ENCODE measurements at regions of chr1 and their contacts with region 1.

Region 1: DNA sequence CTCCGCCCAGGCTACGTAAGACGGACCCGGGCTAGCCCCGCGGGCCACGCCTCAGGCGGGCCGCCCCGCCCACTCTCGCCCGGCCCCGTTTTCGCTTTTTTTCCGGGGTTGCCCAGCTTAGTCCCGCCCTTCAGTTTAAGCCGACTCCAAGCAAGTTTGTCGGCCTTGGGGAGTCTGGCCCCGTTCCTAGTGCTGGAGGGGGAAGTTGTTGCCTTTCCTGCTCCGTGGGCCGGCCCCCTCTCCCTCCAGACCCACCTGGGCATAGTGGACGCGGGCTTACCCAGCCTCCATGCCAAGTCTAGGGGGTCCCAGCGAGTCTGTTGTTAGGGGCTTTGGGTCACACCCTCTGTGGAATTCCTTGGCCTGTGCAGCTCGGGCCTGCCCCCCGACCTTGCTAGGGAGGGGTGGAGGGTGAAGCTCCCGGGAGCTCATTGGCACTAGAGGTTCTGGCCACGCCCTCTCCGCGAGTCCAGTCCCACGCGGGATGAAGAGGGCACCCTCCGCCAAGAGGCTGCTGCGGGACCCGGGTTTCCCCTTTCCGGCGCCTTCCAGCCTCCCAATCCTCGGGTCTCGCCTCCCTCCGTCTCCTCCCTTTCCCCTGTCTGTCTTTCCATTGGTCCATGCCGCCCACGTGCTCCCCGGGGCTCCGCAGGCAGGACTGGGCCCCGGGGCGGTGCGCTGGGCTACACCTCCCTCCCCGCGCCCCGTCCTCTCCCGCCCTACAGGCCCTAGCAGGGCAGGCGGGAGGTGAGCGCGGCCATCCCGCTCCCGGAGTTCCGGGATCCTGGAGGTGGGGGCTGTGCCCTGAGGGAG is 3.3 kb downstream of the RUSC1 start:
- DNase-seq: peak; percentile 95
- H3K4me3 ChIP-seq: peak overlapping the region; percentile 61 to 76 (median 70)
- H3K27ac ChIP-seq: peak overlapping the region; percentile 40
- H3K4me1 ChIP-seq: peaks cover 41% of the 10 kb centered on the region
- H3K27me3 ChIP-seq: no peaks in the 10 kb centered on the region
- CTCF ChIP-seq: no peak
- POLR2A ChIP-seq: peak; percentile 56

Region 2: GRCh38 chr1:155178441-155179111 is 145.4 kb before region 1 on chr1:
- CTCF ChIA-PET with region 1: no interaction called
- POLR2A ChIA-PET with region 1: no interaction called
- dilution Hi-C with region 1: no loop called
- intact Hi-C with region 1: no loop called
- DNase-seq: no peak
- H3K4me3 ChIP-seq: no peak overlapping the region
- H3K27ac ChIP-seq: no peak overlapping the region
- H3K4me1 ChIP-seq: peaks cover 3% of the 10 kb centered on the region
- H3K27me3 ChIP-seq: no peaks in the 10 kb centered on the region
- CTCF ChIP-seq: no peak
- POLR2A ChIP-seq: no peak

Region 3: GRCh38 chr1:155261852-155262673 is 61.9 kb before region 1 on chr1 and contains the start of gene SCAMP3:
- CTCF ChIA-PET with region 1: interaction called, 3 read pairs
- POLR2A ChIA-PET with region 1: no interaction called
- dilution Hi-C with region 1: no loop called
- intact Hi-C with region 1: loop called (anchors 1 kb)
- DNase-seq: peak; percentile 99
- H3K4me3 ChIP-seq: peak within 1 kb of the TSS; percentile 51 to 74 (median 64)
- H3K27ac ChIP-seq: peak within 1 kb of the TSS; percentile 6
- H3K4me1 ChIP-seq: peaks cover 8% of the 10 kb centered on the region
- H3K27me3 ChIP-seq: no peaks in the 10 kb centered on the region
- CTCF ChIP-seq: no peak
- POLR2A ChIP-seq: peak; percentile 97
- total RNA-seq, gene SCAMP3: 80.1 and 80.8 TPM in 2 replicates

Region 4: GRCh38 chr1:155308493-155309422 is 15.2 kb before region 1 on chr1 and contains the start of gene FDPS:
- CTCF ChIA-PET with region 1: interaction called, 13 read pairs
- POLR2A ChIA-PET with region 1: interaction called, 4 read pairs
- dilution Hi-C with region 1: no loop called
- intact Hi-C with region 1: loop called (anchors 1 kb)
- DNase-seq: peak; percentile 99
- H3K4me3 ChIP-seq: peak within 1 kb of the TSS; percentile 47 to 86 (median 84)
- H3K27ac ChIP-seq: peak within 1 kb of the TSS; percentile 88
- H3K4me1 ChIP-seq: peaks cover 24% of the 10 kb centered on the region
- H3K27me3 ChIP-seq: no peaks in the 10 kb centered on the region
- CTCF ChIP-seq: no peak
- POLR2A ChIP-seq: peak; percentile 87
- total RNA-seq, gene FDPS: 630 and 670 TPM in 2 replicates

Region 5: GRCh38 chr1:155379631-155380090 is 55.7 kb after region 1 on chr1:
- CTCF ChIA-PET with region 1: no interaction called
- POLR2A ChIA-PET with region 1: no interaction called
- dilution Hi-C with region 1: no loop called
- intact Hi-C with region 1: no loop called
- DNase-seq: peak; percentile 86
- H3K4me3 ChIP-seq: no peak overlapping the region
- H3K27ac ChIP-seq: no peak overlapping the region
- H3K4me1 ChIP-seq: peaks cover 2% of the 10 kb centered on the region
- H3K27me3 ChIP-seq: no peaks in the 10 kb centered on the region
- CTCF ChIP-seq: no peak
- POLR2A ChIP-seq: no peak

Region 6: GRCh38 chr1:155591770-155592169 is 267.8 kb after region 1 on chr1:
- CTCF ChIA-PET with region 1: interaction called, 3 read pairs
- POLR2A ChIA-PET with region 1: no interaction called
- dilution Hi-C with region 1: no loop called
- intact Hi-C with region 1: loop called (anchors 2 kb)
- DNase-seq: peak; percentile 65
- H3K4me3 ChIP-seq: no peak overlapping the region
- H3K27ac ChIP-seq: no peak overlapping the region
- H3K4me1 ChIP-seq: no peaks in the 10 kb centered on the region
- H3K27me3 ChIP-seq: no peaks in the 10 kb centered on the region
- CTCF ChIP-seq: peak; percentile 20 to 28
- POLR2A ChIP-seq: no peak

Region 7: DNA sequence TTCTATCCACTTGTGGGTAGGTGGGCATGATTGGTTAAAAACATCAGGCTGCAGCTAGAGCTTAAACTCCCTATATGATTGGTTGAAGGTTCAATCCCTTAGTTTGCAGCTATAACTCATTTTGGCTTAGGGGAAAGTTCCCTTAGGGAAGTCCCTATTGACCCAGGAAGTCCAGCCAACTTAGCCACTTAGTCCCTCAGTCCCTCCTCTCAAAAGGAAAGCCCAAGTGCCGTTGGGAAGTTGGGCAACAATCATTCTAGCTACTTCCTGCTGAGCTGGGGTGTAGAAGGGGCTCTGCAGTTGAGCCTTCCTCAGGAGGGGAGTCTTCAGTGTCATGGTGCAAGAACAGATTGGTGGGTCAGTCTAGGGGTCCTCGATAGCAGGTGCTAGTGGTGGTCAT is 298.2 kb after region 1 on chr1:
- CTCF ChIA-PET with region 1: no interaction called
- POLR2A ChIA-PET with region 1: no interaction called
- dilution Hi-C with region 1: no loop called
- intact Hi-C with region 1: no loop called
- DNase-seq: no peak
- H3K4me3 ChIP-seq: no peak overlapping the region
- H3K27ac ChIP-seq: no peak overlapping the region
- H3K4me1 ChIP-seq: no peaks in the 10 kb centered on the region
- H3K27me3 ChIP-seq: peaks cover 10 to 11% of the 10 kb centered on the region in 2 experiments
- CTCF ChIP-seq: no peak
- POLR2A ChIP-seq: no peak

Measured in endothelial cell of umbilical vein (primary cell).